Gastrocnemius medialis (tissue), 4 donors: ENCODE measurements at regions of chr9 and their contacts with region 1.

Region 1: GRCh38 chr9:30628915-30629564 is 1755.4 kb upstream of the ACO1 start:
- DNase-seq: no peak
- ATAC-seq: no peak
- H3K4me3 ChIP-seq: no peak overlapping the region
- H3K27ac ChIP-seq: no peak overlapping the region
- H3K4me1 ChIP-seq: no peaks in the 10 kb centered on the region
- H3K27me3 ChIP-seq: no peaks in the 10 kb centered on the region
- CTCF ChIP-seq: no peak
- POLR2A ChIP-seq: no peak

Region 2: DNA sequence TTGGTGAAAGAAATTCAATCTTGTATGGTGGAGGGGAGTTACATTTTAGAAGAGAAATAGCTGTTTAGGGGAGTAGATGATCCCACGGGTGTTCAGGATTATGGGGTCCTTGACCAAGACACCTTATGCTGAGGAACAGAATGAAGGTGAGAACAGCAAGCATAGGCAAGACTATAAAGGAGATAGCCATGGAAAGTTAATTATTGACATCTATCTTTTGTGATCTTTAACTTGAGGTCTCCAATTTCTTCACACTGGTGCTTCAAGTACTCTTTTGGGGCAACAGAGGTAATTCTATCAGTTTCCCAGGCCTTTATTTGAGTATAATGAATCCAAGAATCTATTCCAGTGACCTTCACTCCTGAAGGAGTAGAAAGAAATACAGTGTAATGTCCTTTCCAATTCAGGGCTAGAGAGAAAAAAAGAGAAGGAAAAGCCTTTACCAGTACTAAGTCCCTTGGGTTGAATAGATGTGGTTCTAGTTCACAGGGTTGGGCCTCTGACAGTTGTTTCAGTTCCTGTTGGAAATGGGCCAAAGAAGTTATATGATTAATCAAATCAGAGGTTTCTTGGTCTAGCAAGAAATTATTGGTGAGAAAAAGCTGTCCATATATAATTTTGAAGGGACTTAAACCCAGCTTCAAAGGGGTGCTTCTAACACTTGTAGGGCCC is 348.7 kb before region 1 on chr9:
- in situ Hi-C with region 1: loop called in 1 of 4 experiments (anchors 25 kb)
- intact Hi-C with region 1: no loop called
- DNase-seq: no peak
- ATAC-seq: no peak
- H3K4me3 ChIP-seq: no peak overlapping the region
- H3K27ac ChIP-seq: no peak overlapping the region
- H3K4me1 ChIP-seq: no peaks in the 10 kb centered on the region
- H3K27me3 ChIP-seq: no peaks in the 10 kb centered on the region
- CTCF ChIP-seq: no peak
- POLR2A ChIP-seq: no peak

Region 3: GRCh38 chr9:30673132-30673531 is 44.1 kb after region 1 on chr9:
- in situ Hi-C with region 1: no loop called
- intact Hi-C with region 1: no loop called
- DNase-seq: no peak
- ATAC-seq: no peak
- H3K4me3 ChIP-seq: no peak overlapping the region
- H3K27ac ChIP-seq: no peak overlapping the region
- H3K4me1 ChIP-seq: no peaks in the 10 kb centered on the region
- H3K27me3 ChIP-seq: no peaks in the 10 kb centered on the region
- CTCF ChIP-seq: no peak
- POLR2A ChIP-seq: no peak

Region 4: GRCh38 chr9:30732060-30732459 is 103.0 kb after region 1 on chr9:
- in situ Hi-C with region 1: loop called in 1 of 4 experiments (anchors 25 kb)
- intact Hi-C with region 1: no loop called
- DNase-seq: no peak
- ATAC-seq: no peak
- H3K4me3 ChIP-seq: no peak overlapping the region
- H3K27ac ChIP-seq: no peak overlapping the region
- H3K4me1 ChIP-seq: no peaks in the 10 kb centered on the region
- H3K27me3 ChIP-seq: no peaks in the 10 kb centered on the region
- CTCF ChIP-seq: no peak
- POLR2A ChIP-seq: no peak